ENCODE measurements at regions of chr19 and their contacts with region 1.

Region 1: GRCh38 chr19:5503598-5503997 is 48.4 kb downstream of the ZNRF4 start:
- DNase-seq: no peak
- H3K4me3 ChIP-seq: no peak overlapping the region
- H3K27ac ChIP-seq: no peak overlapping the region
- H3K4me1 ChIP-seq: no peaks in the 10 kb centered on the region
- H3K27me3 ChIP-seq: peaks cover 5% of the 10 kb centered on the region
- CTCF ChIP-seq: no peak
- EP300 ChIP-seq: no peak
- POLR2A ChIP-seq: no peak

Region 2: GRCh38 chr19:5200844-5201243 is 302.8 kb before region 1 on chr19:
- in situ Hi-C with region 1: no loop called
- intact Hi-C with region 1: no loop called
- DNase-seq: no peak
- H3K4me3 ChIP-seq: no peak overlapping the region
- H3K27ac ChIP-seq: no peak overlapping the region
- H3K4me1 ChIP-seq: no peaks in the 10 kb centered on the region
- H3K27me3 ChIP-seq: no peaks in the 10 kb centered on the region
- CTCF ChIP-seq: no peak
- EP300 ChIP-seq: no peak
- POLR2A ChIP-seq: no peak

Region 3: GRCh38 chr19:5526691-5527090 is 23.1 kb after region 1 on chr19:
- in situ Hi-C with region 1: no loop called
- intact Hi-C with region 1: loop called (anchors 1 kb)
- DNase-seq: no peak
- H3K4me3 ChIP-seq: no peak overlapping the region
- H3K27ac ChIP-seq: no peak overlapping the region
- H3K4me1 ChIP-seq: no peaks in the 10 kb centered on the region
- H3K27me3 ChIP-seq: peaks cover 8% of the 10 kb centered on the region
- CTCF ChIP-seq: no peak
- EP300 ChIP-seq: no peak
- POLR2A ChIP-seq: no peak

Region 4: DNA sequence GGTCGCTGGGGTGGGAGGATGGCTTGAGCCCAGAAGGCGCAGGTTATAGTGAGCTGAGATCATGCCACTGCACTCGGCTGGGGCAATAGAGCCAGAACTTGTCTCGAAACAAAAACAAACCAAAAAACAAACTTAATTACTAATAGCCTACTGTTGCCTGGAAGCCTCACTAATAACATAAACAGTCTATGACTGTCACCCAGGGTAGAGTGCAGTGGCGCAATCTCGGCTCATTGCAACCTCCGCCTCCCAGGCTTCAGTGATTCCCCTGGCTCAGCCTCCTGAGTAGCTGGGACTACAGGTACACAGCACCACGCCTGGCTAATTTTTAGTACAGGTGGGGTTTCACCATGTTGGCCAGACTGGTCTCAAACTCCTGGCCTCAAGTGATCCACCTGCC is 234.8 kb after region 1 on chr19:
- in situ Hi-C with region 1: no loop called
- intact Hi-C with region 1: no loop called
- DNase-seq: no peak
- H3K4me3 ChIP-seq: no peak overlapping the region
- H3K27ac ChIP-seq: no peak overlapping the region
- H3K4me1 ChIP-seq: no peaks in the 10 kb centered on the region
- H3K27me3 ChIP-seq: peaks cover 7% of the 10 kb centered on the region
- CTCF ChIP-seq: no peak
- EP300 ChIP-seq: no peak
- POLR2A ChIP-seq: no peak

Measured in transverse colon (tissue), 4 donors.